ENCODE measurements at regions of chr13 and their contacts with region 1.

Region 1: DNA sequence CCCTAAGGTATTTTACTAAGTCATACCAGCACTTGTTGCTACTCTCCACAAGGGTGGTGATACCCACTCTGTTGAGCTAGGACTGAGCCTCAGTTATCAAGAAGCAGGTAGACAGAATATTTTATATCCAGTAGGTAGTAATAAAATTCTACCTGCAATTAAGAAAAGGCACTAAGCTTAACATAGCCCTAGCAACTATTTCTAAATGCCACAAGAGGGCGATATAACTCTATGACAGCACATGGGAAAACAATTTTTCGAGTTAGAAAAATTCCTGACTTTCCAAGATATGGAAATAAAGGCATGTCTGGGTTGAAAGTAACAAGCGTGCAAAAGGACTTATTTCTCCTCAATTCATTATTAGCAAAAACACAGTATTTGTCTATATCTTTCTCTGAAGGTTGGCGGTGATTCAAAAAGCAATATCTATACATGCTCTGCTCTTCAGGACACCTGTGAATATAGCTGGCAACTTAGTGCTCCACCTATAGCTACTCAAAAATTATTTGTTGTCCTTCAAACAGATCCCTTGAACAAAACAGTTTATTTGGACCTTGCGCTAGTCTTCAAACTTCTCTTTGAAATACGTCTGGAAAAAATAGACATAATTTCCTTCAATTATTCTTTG is 14.7 kb downstream of the CCDC169 start:
- DNase-seq: no peak
- ATAC-seq: peak; percentile 63
- H3K4me3 ChIP-seq: no peak overlapping the region
- H3K27ac ChIP-seq: no peak overlapping the region
- H3K4me1 ChIP-seq: no peaks in the 10 kb centered on the region
- H3K27me3 ChIP-seq: no peaks in the 10 kb centered on the region
- CTCF ChIP-seq: peak; percentile 85

Region 2: DNA sequence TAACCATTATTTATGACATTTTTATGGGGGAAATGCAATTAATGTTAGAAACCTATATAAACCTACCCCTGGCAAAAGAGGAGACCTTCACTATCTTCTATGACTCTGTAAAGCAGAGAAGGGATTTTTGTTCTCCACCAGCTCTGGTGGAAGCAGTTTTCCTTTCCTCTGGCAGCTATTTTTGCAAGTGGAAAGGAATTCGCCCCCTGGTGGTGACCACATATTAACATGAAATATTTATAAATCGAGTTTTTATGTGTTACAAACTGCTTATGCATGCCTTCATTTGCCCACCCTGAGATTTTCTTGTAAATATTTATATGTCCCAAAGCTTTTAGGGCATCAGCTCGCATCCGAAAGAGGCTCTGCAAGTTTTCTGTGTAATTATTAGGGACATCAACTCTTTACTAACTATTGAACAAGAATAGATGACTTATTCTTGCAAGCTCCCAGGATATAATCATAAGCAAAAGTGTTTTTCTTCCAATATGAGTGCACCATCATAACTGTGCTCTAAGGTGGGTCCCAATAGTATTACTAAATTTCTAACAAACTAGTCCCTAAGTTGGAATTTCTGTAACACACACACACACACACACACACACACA is 453.3 kb after region 1 on chr13:
- intact Hi-C with region 1: loop called (anchors 5 kb)
- DNase-seq: no peak
- ATAC-seq: peak; percentile 58
- H3K4me3 ChIP-seq: no peak overlapping the region
- H3K27ac ChIP-seq: no peak overlapping the region
- H3K4me1 ChIP-seq: no peaks in the 10 kb centered on the region
- H3K27me3 ChIP-seq: no peaks in the 10 kb centered on the region
- CTCF ChIP-seq: peak; percentile 67